ENCODE measurements at regions of chrX and their contacts with region 1.

Region 1: DNA sequence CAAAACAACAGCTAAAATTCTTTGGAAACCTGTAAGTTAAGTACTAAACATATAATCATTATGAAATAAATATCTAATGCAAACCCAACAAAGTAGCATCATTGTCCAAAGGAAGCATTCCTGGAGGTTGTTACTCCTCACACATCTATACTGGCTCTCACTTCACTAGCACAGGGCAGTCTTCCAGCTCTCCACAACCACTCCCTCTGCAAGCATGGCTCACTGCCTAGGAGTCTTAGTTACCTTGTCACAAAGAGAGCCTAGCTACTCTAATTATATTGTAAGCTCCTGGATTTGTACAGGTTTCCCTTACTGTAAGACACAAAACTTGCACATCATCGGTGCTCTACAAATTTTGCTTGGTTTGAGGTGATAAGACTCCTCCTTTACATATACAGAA is 76.1 kb downstream of the AMMECR1 start:
- DNase-seq: peak in 4 of 5 donors; percentile 15 to 43 (median 27)
- ATAC-seq: peak in 3 of 4 donors; percentile 68 to 77 (median 73)
- H3K4me3 ChIP-seq: no peak overlapping the region
- H3K27ac ChIP-seq: no peak overlapping the region
- H3K4me1 ChIP-seq: peaks cover 0 to 4% (median 0%) of the 10 kb centered on the region in 12 donors
- H3K27me3 ChIP-seq: no peaks in the 10 kb centered on the region
- CTCF ChIP-seq: no peak
- POLR2A ChIP-seq: no peak

Region 2: GRCh38 chrX:109774706-109775105 is 467.1 kb before region 1 on chrX:
- intact Hi-C with region 1: no loop called
- DNase-seq: no peak
- ATAC-seq: peak in 3 of 4 donors; percentile 49 to 85 (median 65)
- H3K4me3 ChIP-seq: no peak overlapping the region
- H3K27ac ChIP-seq: no peak overlapping the region
- H3K4me1 ChIP-seq: no peaks in the 10 kb centered on the region
- H3K27me3 ChIP-seq: peaks cover 0 to 7% (median 0%) of the 10 kb centered on the region in 9 donors
- CTCF ChIP-seq: no peak
- POLR2A ChIP-seq: no peak

Region 3: DNA sequence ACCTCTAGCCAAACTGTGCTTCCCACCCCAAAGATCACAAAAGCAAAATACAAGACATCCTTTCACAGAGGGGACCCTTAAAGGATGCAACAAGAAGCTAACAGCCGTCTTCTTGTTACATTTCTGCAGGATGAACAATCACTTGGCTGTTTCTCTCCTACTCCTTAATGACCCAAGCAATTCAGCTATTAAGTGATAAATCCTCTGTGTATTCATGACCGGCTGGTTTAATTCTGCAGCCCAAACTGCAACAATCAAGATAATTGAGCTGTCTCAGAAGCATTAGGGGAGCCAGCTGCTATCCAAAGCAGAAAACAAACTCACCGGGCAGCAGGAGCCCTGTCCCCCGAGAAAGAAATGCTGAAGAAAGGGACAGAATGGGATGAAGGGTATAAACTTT is 422.8 kb before region 1 on chrX:
- intact Hi-C with region 1: no loop called
- DNase-seq: no peak
- ATAC-seq: peak in 1 of 4 donors; percentile 34
- H3K4me3 ChIP-seq: no peak overlapping the region
- H3K27ac ChIP-seq: no peak overlapping the region
- H3K4me1 ChIP-seq: no peaks in the 10 kb centered on the region
- H3K27me3 ChIP-seq: peaks cover 0 to 30% (median 0%) of the 10 kb centered on the region in 9 donors
- CTCF ChIP-seq: no peak
- POLR2A ChIP-seq: no peak

Region 4: DNA sequence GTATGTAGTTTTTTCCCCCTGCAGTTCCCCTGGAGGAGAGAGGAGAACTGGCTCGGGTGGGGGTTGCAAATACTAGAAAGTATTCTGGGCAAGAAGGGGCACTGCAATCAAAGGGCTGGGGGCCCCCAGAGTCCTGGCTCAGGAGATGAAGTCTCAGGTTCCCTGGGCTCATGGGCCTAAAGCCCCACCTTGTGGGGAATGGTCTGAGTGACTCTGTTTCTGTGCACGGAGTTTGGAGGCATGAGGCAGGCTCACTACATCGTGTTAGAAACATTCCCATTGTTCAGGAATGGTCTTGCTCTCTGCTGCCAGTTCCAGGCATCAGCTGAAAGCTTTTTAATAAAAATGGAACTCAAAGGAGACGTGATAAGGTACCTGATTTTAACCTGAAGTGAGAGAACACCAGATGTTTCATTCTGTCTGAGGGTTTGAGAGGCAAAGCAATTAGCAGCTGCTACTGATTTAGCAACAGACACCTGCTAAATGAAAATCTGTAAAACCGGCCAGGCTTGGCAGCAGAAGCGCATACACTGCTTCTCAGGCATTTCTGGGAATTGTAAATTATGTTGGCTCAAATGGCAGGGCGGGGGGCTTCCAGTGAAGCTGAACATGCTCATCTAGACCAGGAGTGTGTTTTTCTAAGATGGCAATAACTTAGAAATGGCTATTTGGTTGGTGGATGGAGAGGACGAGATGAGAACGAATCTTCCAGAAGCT is 116.2 kb before region 1 on chrX:
- intact Hi-C with region 1: no loop called
- DNase-seq: no peak
- ATAC-seq: peak; percentile 41 to 63 (median 54)
- H3K4me3 ChIP-seq: no peak overlapping the region
- H3K27ac ChIP-seq: peak overlapping the region in 2 of 12 donors; percentile 14 to 41
- H3K4me1 ChIP-seq: peaks cover 0 to 11% (median 0%) of the 10 kb centered on the region in 12 donors
- H3K27me3 ChIP-seq: peaks cover 0 to 7% (median 0%) of the 10 kb centered on the region in 9 donors
- CTCF ChIP-seq: peak in 5 of 12 donors; percentile 11 to 32 (median 13)
- POLR2A ChIP-seq: no peak

Region 5: GRCh38 chrX:110268886-110269285 is 27.1 kb after region 1 on chrX:
- intact Hi-C with region 1: loop called in 1 of 10 experiments (anchors 2 kb)
- DNase-seq: no peak
- ATAC-seq: no peak
- H3K4me3 ChIP-seq: no peak overlapping the region
- H3K27ac ChIP-seq: peak overlapping the region in 1 of 12 donors; percentile 21
- H3K4me1 ChIP-seq: peaks cover 0 to 18% (median 2%) of the 10 kb centered on the region in 12 donors
- H3K27me3 ChIP-seq: peaks cover 0 to 6% (median 0%) of the 10 kb centered on the region in 9 donors
- CTCF ChIP-seq: no peak
- POLR2A ChIP-seq: no peak

Measured in heart left ventricle (tissue), 16 donors.